Left cardiac atrium (tissue), 4 donors: ENCODE measurements at regions of chr17 and their contacts with region 1.

Region 1: DNA sequence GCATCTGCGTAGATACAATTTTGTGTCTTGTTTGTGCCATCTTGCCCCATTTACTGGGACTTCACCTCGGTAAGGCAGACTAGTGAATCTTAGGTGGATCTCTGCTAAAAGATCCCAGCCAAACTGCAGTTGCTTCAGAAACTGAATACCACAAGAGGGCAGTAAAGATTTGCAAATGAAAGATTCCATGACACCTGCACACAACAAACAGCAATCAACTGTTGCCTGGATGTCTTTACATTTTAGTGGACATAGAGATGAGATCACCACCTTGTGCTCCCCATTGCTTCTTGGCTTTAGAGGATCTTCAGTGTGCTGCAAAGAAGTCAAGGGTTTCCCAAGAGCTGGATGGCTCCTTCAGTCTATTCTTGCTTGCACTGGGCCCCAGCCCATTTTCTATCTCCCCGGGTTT is 119.2 kb upstream of the CACNG5 start:
- DNase-seq: no peak
- ATAC-seq: peak; percentile 35 to 56

Region 2: GRCh38 chr17:66777689-66778225 is 62.0 kb after region 1 on chr17:
- intact Hi-C with region 1: loop called in 1 of 2 experiments (anchors 10 kb)
- DNase-seq: no peak
- ATAC-seq: no peak

Region 3: DNA sequence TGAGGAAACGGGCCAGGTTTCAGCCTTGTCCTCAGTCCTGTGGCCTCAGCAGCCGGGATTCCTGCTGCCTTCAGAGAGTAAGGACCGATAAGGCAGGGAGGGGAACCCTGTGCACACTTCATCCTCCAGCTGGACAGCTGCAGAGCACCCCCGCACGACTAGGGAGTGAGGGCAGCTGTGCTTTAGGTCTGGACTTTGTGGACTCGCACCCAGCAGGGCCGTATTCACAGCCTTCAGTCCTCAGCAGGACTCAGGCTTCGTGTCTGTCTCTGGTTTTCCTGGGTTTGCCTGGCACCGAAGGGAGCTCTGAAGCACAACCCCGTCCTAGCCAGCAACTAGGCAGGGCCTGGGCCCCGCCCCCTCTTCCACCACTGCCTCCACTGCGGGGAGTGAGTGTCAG is 73.3 kb after region 1 on chr17:
- intact Hi-C with region 1: no loop called
- DNase-seq: no peak
- ATAC-seq: peak in 1 of 2 donors; percentile 49

Region 4: GRCh38 chr17:66906321-66907278 is 190.8 kb after region 1 on chr17:
- intact Hi-C with region 1: loop called (anchors 1 to 5 kb)
- DNase-seq: peak; percentile 88
- ATAC-seq: peak; percentile 7 to 21

Region 5: DNA sequence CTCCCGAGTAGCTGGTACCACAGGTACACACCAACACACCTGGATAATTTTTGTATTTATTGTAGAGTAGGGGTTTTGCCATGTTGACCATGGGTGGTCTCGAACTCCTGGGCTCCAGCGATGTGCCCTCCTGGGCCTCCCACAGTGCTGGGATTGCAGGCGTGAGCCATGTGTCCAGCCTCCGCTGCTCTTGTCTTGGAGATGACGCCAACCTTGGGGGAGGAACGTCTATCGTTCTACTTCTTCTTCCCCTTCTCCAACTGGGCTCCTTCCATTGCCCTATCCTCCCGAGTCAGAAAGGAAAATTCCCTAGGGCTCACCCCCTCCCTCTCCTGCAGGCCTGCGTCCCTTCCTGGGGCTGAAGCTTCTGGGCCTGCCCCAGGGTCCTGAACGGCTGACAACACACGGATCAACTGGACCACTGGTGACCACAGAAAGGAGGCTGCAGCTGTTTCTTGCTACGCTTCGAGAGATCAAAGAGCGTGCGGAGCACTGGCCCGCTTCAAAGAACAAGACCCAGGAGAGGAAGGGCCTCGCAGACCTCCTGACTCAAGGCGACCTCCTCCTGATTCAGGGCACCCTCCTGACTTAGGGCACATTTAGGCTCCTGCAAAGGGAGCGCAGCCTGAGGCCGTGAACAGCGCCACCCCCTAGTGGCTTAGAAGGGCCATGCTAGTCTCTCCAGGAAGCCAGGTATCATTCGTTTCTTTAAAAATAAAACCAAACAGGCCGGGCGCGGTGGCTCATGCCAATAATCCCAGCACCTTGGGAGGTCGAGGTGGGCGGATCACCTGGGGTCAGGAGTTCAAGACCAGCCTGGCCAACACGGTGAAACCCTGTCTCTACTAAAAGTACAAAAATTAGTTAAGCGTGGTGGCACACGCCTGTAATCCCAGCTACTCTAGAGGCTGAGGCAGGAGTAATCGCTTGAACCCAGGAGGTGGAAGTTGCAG is 577.8 kb after region 1 on chr17:
- intact Hi-C with region 1: loop called in 1 of 2 experiments (anchors 10 kb)
- DNase-seq: peak; percentile 68
- ATAC-seq: peak; percentile 56 to 74